Common myeloid progenitor, CD34-positive (primary cell): ENCODE measurements at regions of chrX and their contacts with region 1.

Region 1: GRCh38 chrX:151680805-151681204 is 14.5 kb upstream of the PRRG3 start:
- DNase-seq: peak; percentile 36 to 67 (median 55)
- H3K4me3 ChIP-seq: no peak overlapping the region
- H3K27ac ChIP-seq: no peak overlapping the region
- H3K4me1 ChIP-seq: no peaks in the 10 kb centered on the region
- H3K27me3 ChIP-seq: peaks cover 0 to 5% (median 2%) of the 10 kb centered on the region in 5 experiments

Region 2: DNA sequence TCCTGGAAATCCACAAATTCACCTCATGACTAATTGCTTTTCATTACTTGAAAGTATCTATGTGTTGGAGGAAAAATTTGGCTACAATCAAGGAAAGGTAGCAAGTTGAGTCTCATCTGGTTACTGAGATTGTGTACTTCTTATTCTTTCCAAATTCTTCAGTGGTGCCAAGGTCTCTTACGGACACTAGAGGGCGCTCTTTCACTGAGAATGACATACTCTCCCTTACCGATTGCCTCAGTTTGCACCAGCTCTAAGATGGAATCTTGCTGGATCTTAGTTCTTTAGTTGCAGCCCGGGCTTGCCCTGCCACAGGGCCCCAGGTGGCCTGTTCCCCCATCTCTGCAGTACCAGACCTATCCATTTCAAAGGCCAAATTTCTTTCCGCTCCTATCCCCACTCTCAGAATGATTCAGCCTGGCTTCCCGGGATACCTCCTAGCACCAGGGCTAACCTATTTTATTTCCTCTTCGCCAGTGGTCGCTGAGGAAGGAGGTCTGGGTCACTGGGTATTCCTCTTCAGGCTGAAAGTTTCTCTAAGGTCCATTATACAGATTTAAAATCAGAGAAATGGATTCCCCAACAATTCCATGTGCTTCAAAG is 529.0 kb before region 1 on chrX:
- CTCF ChIA-PET with region 1: interaction called, 12 read pairs
- POLR2A ChIA-PET with region 1: no interaction called
- DNase-seq: peak; percentile 29 to 67 (median 56)
- H3K4me3 ChIP-seq: no peak overlapping the region
- H3K27ac ChIP-seq: no peak overlapping the region
- H3K4me1 ChIP-seq: no peaks in the 10 kb centered on the region
- H3K27me3 ChIP-seq: peaks cover 3 to 27% (median 18%) of the 10 kb centered on the region in 5 experiments